ENCODE measurements at regions of chr2 and their contacts with region 1.

Region 1: DNA sequence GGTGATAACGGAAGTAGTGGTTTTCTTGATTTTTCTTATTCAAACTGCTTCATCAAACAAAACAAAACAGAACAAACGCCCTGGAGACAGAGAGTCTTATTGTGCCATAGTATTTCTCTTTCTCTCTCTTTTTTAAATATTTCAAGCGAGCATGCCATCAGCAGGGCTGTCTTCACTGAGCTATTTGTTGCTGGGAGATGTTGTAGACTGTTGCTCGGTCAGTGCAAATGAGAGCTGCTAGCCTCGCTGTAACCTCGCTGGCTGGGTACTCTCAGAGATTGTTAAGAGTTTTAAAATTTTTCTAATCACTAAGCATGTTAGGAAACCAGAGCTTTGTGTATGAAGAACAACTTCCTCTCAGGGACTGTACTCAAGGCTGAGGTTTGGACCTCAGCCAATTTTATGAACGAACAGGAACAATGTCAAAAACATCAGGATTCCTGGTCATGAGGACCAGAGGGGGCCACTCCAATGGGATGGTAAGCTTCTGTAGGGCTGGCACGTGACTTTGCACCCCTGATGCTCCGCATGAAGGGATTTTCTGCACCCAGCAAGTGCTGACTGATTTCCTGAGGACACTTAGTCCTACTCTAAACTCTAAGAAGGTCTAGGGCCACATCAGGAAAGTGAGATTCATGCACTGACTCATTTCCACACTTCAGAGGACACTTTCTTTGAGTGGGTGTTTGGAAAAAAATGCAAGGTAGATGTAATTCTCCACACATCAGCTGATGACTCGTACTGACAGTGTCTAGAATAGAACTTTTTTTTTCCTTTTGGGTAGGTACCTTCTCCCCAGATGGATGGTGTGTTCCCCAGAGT is 59.8 kb upstream of the IL1R1 start:
- DNase-seq: peak; percentile 88
- ATAC-seq: peak; percentile 83
- H3K4me3 ChIP-seq: no peak overlapping the region
- H3K27ac ChIP-seq: peak overlapping the region; percentile 59
- H3K4me1 ChIP-seq: peaks cover 31% of the 10 kb centered on the region
- H3K27me3 ChIP-seq: no peaks in the 10 kb centered on the region
- CTCF ChIP-seq: no peak
- EP300 ChIP-seq: peak; percentile 71 to 96
- POLR2A ChIP-seq: no peak
- RAD21 ChIP-seq: no peak

Region 2: DNA sequence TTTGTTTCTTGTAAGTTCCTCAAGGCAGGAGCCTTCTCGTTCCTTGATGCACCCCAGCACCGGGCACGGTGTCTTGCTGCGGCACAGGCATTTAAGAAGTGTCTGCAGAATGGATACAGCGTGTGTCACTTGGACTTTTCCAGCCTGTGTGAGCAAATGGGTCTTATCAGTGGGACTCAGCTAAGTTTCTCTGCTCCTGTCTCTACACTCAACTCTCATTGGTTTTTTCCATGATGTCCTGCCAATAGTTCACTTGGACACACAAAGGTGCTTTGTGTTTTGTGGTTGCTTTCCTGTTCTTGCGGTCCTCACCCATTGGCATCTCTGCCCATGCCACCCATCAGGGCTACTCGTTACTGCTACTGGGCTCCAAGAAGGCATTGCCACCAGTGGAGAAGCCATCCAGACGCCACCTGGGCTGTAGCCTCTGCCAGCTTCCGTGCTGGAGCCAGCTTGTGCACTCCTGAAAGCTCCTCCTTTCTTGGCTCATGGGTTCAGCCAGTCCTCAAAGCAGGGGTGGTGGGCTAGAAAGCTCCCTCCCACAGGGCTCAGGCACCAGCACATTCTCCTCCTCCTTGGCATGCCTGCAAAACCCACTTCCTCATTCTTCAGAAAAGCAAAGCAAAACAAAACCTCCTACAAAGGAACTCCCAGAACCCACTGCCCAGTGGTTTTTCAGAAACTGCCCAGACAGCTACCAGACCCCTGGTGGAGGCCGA is 49.6 kb before region 1 on chr2:
- CTCF ChIA-PET with region 1: interaction called, 3 read pairs
- POLR2A ChIA-PET with region 1: interaction called, 3 read pairs
- RAD21 ChIA-PET with region 1: interaction called, 10 read pairs
- SMC1A ChIA-PET with region 1: interaction called, 6 read pairs
- in situ Hi-C with region 1: no loop called
- intact Hi-C with region 1: no loop called
- DNase-seq: peak; percentile 53
- ATAC-seq: peak; percentile 94
- H3K4me3 ChIP-seq: no peak overlapping the region
- H3K27ac ChIP-seq: no peak overlapping the region
- H3K4me1 ChIP-seq: peaks cover 5% of the 10 kb centered on the region
- H3K27me3 ChIP-seq: no peaks in the 10 kb centered on the region
- CTCF ChIP-seq: no peak
- EP300 ChIP-seq: peak in 1 of 2 experiments; percentile 29; a peak in 1 of 4 replicates
- POLR2A ChIP-seq: no peak
- RAD21 ChIP-seq: no peak

Region 3: DNA sequence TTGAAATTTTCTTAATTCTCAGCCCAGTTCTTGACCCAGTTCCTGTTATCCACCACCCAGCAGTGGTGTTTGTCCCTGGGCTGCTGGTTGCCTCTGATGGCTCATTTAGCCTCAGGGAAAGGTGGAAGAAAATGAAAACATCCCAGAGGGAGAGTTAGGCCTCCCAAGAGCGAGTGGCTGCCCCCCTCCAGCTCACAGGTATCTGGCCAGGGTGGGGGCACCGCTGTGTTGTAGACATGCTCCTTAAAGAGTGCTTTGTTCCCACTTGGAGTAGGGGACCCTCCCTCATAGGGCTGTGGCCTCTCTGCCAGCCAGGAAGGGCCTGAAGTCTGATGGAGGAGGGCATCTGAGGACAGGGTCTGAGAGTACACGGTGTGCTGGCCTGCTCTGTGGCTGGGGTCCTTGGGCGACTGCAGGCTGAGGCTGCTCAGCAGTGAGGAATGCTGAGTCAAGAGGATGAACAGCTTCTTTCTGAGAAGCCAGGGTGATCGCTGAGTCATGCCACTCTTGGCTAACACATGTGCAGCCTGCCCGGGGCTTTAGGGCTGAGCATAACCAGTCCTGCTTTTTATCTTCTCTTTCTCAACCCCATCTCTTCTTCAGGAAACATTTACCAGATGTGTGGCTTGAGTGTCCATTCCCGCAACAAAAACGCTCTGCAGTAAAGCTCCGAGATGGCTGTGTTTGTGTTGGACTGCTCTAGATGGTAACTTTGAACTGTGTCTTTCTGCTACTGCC is 18.7 kb before region 1 on chr2:
- CTCF ChIA-PET with region 1: interaction called, 3 read pairs
- POLR2A ChIA-PET with region 1: interaction called, 4 read pairs
- RAD21 ChIA-PET with region 1: interaction called, 35 read pairs
- SMC1A ChIA-PET with region 1: interaction called, 37 read pairs
- in situ Hi-C with region 1: no loop called
- intact Hi-C with region 1: no loop called
- DNase-seq: no peak
- ATAC-seq: peak; percentile 69
- H3K4me3 ChIP-seq: no peak overlapping the region
- H3K27ac ChIP-seq: no peak overlapping the region
- H3K4me1 ChIP-seq: no peaks in the 10 kb centered on the region; the same call in 1 of the 2 replicates
- H3K27me3 ChIP-seq: no peaks in the 10 kb centered on the region; a peak in 1 of 4 replicates
- CTCF ChIP-seq: no peak
- EP300 ChIP-seq: no peak
- POLR2A ChIP-seq: no peak
- RAD21 ChIP-seq: no peak

Region 4: GRCh38 chr2:102103992-102104871 is 21.4 kb after region 1 on chr2:
- CTCF ChIA-PET with region 1: interaction called, 31 read pairs
- POLR2A ChIA-PET with region 1: interaction called, 16 read pairs
- RAD21 ChIA-PET with region 1: interaction called, 48 read pairs
- SMC1A ChIA-PET with region 1: interaction called, 73 read pairs
- in situ Hi-C with region 1: no loop called
- intact Hi-C with region 1: loop called (anchors 1 kb)
- DNase-seq: peak; percentile 67
- ATAC-seq: peak; percentile 79
- H3K4me3 ChIP-seq: peak overlapping the region; percentile 53
- H3K27ac ChIP-seq: peak overlapping the region; percentile 37; the same call in 1 of the 2 replicates
- H3K4me1 ChIP-seq: no peaks in the 10 kb centered on the region
- H3K27me3 ChIP-seq: no peaks in the 10 kb centered on the region
- CTCF ChIP-seq: no peak
- EP300 ChIP-seq: peak in 1 of 2 experiments; percentile 54; a peak in 2 of 4 replicates
- POLR2A ChIP-seq: no peak
- RAD21 ChIP-seq: no peak

Region 5: GRCh38 chr2:102355526-102356380 is 273.0 kb after region 1 on chr2 and contains the start of gene IL18R1:
- CTCF ChIA-PET with region 1: no interaction called
- POLR2A ChIA-PET with region 1: no interaction called
- RAD21 ChIA-PET with region 1: no interaction called
- SMC1A ChIA-PET with region 1: no interaction called
- in situ Hi-C with region 1: no loop called
- intact Hi-C with region 1: loop called (anchors 5 kb)
- DNase-seq: peak; percentile 42
- ATAC-seq: peak; percentile 88
- H3K4me3 ChIP-seq: peak within 1 kb of the TSS; percentile 96
- H3K27ac ChIP-seq: peak within 1 kb of the TSS; percentile 91
- H3K4me1 ChIP-seq: peaks cover 4% of the 10 kb centered on the region
- H3K27me3 ChIP-seq: no peaks in the 10 kb centered on the region
- CTCF ChIP-seq: peak; percentile 72 to 91 (median 82)
- EP300 ChIP-seq: no peak
- POLR2A ChIP-seq: no peak
- RAD21 ChIP-seq: peak; percentile 76
- polyA plus RNA-seq, gene IL18R1: 3.5 to 3.8 TPM

Measured in GM12878 (cell line).